ENCODE measurements at regions of chr3 and their contacts with region 1.

Region 1: DNA sequence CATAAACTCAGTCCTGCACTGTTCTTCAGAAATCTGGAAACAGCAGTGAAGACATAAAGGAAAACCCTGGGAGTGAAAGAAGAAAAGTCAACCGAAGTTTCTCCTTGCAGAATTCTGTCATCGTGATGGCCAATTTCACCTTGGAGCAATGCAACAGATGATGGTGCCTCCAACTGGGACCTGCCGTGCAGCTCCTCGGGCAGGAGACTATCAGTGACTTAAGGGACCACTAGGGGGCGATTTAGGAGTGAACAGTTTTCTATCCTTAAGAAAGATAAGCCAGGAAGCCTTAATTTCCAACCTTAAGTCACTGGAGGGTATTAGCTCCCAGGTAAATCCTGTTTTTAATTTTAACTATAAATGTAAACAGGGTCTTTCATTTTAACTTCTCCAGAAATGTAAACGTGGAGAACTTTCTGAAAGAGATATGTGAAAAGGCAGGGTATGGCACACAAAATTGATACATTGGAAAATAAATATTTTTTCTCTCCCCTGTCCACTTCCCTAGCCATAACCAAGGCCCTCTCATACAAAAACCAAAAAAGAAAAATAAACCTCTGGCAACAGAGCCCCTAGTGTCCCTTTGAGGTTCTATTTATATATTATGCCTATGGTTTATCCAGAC is 116.3 kb downstream of the PDZRN3 start:
- DNase-seq: no peak
- H3K4me3 ChIP-seq: no peak overlapping the region
- CTCF ChIP-seq: peak; percentile 71

Region 2: GRCh38 chr3:72977060-72977808 is 531.2 kb before region 1 on chr3:
- CTCF ChIA-PET with region 1: no interaction called
- POLR2A ChIA-PET with region 1: no interaction called
- DNase-seq: no peak
- H3K4me3 ChIP-seq: no peak overlapping the region
- CTCF ChIP-seq: no peak

Region 3: GRCh38 chr3:73056014-73056844 is 452.2 kb before region 1 on chr3:
- CTCF ChIA-PET with region 1: no interaction called
- POLR2A ChIA-PET with region 1: no interaction called
- DNase-seq: no peak
- H3K4me3 ChIP-seq: no peak overlapping the region
- CTCF ChIP-seq: peak; percentile 39

Region 4: GRCh38 chr3:73493543-73494308 is 14.7 kb before region 1 on chr3:
- CTCF ChIA-PET with region 1: interaction called, 22 read pairs
- POLR2A ChIA-PET with region 1: no interaction called
- DNase-seq: no peak
- H3K4me3 ChIP-seq: no peak overlapping the region
- CTCF ChIP-seq: no peak

Region 5: GRCh38 chr3:73547427-73548248 is 39.2 kb after region 1 on chr3:
- CTCF ChIA-PET with region 1: interaction called, 27 read pairs
- POLR2A ChIA-PET with region 1: no interaction called
- DNase-seq: peak; percentile 91
- H3K4me3 ChIP-seq: peak overlapping the region; percentile 25; the same call in 1 of the 2 replicates
- CTCF ChIP-seq: no peak

Region 6: DNA sequence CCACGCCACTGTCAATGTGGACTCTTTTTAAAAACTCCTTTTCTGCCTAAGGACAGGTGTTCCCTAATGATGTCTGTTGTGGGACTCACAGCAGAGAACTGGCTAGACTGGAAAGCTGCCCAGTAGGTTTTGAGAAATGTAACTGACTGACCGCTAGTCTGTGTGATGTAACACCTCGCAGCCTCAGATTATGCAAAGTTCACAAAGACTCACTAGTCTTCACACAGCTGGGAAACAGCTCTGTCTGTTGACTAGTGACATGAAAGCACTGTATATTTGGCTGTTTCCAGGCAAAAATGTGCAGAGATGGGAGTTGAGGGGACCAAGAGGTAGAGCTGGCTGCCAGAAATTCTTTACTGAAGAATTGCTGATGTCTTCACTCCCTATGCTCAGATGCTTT is 106.0 kb after region 1 on chr3:
- CTCF ChIA-PET with region 1: interaction called, 46 read pairs
- POLR2A ChIA-PET with region 1: no interaction called
- DNase-seq: no peak
- H3K4me3 ChIP-seq: no peak overlapping the region
- CTCF ChIP-seq: no peak

Region 7: GRCh38 chr3:73766599-73767381 is 258.3 kb after region 1 on chr3:
- CTCF ChIA-PET with region 1: interaction called, 28 read pairs
- POLR2A ChIA-PET with region 1: interaction called, 3 read pairs
- DNase-seq: peak; percentile 57
- H3K4me3 ChIP-seq: peak overlapping the region; percentile 44
- CTCF ChIP-seq: no peak